ENCODE measurements at regions of chr4 and their contacts with region 1.

Region 1: DNA sequence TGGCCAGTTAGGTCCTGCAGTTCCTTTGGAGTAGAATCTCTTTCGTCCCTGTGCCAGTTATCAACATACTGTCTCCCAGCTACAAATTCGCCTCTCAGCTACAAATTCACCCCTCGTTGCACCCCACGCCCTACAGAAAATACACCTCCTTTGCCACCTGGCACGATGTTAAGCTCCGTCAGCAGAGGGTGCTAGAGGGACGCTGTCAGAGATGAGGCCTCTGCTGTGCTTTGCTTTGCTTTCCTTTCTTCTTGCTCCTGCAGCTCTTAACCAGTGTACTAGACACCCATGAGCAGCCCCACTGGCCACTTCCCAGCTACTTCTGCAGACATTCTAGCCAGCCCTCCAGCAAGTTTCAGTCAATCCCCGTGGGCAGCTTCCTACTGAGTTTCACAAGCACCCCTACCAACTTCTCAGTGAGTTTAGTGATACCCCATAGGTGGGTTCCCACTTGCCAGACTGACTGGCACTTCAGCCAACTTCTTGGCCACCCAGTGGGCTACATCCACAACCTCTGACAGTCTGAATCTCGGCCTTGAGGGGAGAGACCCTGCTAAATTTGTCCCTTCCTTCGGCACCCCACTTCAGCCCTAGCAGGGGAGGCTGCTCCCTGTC is 21.8 kb downstream of the HAUS3 start:
- DNase-seq: peak; percentile 74 to 87
- ATAC-seq: peak; percentile 90
- H3K4me3 ChIP-seq: no peak overlapping the region
- H3K27ac ChIP-seq: no peak overlapping the region
- H3K4me1 ChIP-seq: no peaks in the 10 kb centered on the region
- H3K27me3 ChIP-seq: no peaks in the 10 kb centered on the region

Region 2: GRCh38 chr4:2436301-2436700 is 216.2 kb after region 1 on chr4:
- intact Hi-C with region 1: loop called in 1 of 2 experiments (anchors 5 kb)
- DNase-seq: no peak
- ATAC-seq: no peak
- H3K4me3 ChIP-seq: no peak overlapping the region
- H3K27ac ChIP-seq: no peak overlapping the region
- H3K4me1 ChIP-seq: no peaks in the 10 kb centered on the region
- H3K27me3 ChIP-seq: no peaks in the 10 kb centered on the region

Region 3: GRCh38 chr4:2462218-2462991 is 242.3 kb after region 1 on chr4:
- intact Hi-C with region 1: loop called (anchors 2 to 5 kb)
- DNase-seq: peak; percentile 78 to 88
- ATAC-seq: peak; percentile 85
- H3K4me3 ChIP-seq: peak overlapping the region; percentile 45 to 71
- H3K27ac ChIP-seq: peak overlapping the region in 1 of 2 donors; percentile 8
- H3K4me1 ChIP-seq: no peaks in the 10 kb centered on the region
- H3K27me3 ChIP-seq: no peaks in the 10 kb centered on the region

Region 4: GRCh38 chr4:2468445-2469192 is 248.5 kb after region 1 on chr4 and contains the start of gene RNF4:
- intact Hi-C with region 1: loop called (anchors 2 to 5 kb)
- DNase-seq: peak; percentile 98
- ATAC-seq: peak; percentile 96
- H3K4me3 ChIP-seq: peak within 1 kb of the TSS; percentile 79 to 87
- H3K27ac ChIP-seq: peak within 1 kb of the TSS; percentile 23 to 41
- H3K4me1 ChIP-seq: peaks cover 0 to 3% of the 10 kb centered on the region in 2 donors
- H3K27me3 ChIP-seq: no peaks in the 10 kb centered on the region
- total RNA-seq, gene RNF4: 50.7 to 52.5 TPM